Caco-2 (cell line): ENCODE measurements at regions of chr17 and their contacts with region 1.

Region 1: DNA sequence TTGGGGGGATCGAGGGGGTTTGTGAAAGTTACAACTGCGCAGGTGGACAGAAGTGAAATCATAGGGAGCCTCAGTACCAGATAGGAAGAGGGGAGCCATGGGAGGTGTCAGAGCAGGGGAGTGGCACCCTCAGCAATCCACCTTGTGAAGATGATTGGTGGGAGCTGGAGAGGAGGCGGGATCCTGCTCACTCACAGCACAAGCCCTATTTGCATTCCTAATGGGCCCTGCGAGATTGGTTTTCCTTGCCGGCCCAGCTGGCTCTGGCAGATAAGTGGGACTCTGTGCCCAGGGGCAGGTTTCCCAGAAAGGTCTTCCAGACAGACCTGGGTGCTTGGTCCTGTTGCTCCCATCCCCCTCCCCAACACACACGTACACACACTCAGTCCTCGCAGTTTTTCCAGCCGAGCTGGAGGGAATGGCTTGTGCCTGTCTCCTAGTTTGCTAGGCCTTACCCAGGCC is 9.4 kb downstream of the WNT3 start:
- DNase-seq: peak in 1 of 2 experiments; percentile 64
- H3K4me3 ChIP-seq: no peak overlapping the region
- H3K4me3 Mint-ChIP-seq: no peak overlapping the region
- H3K27ac Mint-ChIP-seq: no peak overlapping the region
- H3K4me1 ChIP-seq: peaks cover 14% of the 10 kb centered on the region; the same call in 1 of the 2 replicates
- H3K4me1 Mint-ChIP-seq: no peaks in the 10 kb centered on the region
- H3K27me3 ChIP-seq: no peaks in the 10 kb centered on the region
- H3K27me3 Mint-ChIP-seq: no peaks in the 10 kb centered on the region
- CTCF ChIP-seq: no peak

Region 2: DNA sequence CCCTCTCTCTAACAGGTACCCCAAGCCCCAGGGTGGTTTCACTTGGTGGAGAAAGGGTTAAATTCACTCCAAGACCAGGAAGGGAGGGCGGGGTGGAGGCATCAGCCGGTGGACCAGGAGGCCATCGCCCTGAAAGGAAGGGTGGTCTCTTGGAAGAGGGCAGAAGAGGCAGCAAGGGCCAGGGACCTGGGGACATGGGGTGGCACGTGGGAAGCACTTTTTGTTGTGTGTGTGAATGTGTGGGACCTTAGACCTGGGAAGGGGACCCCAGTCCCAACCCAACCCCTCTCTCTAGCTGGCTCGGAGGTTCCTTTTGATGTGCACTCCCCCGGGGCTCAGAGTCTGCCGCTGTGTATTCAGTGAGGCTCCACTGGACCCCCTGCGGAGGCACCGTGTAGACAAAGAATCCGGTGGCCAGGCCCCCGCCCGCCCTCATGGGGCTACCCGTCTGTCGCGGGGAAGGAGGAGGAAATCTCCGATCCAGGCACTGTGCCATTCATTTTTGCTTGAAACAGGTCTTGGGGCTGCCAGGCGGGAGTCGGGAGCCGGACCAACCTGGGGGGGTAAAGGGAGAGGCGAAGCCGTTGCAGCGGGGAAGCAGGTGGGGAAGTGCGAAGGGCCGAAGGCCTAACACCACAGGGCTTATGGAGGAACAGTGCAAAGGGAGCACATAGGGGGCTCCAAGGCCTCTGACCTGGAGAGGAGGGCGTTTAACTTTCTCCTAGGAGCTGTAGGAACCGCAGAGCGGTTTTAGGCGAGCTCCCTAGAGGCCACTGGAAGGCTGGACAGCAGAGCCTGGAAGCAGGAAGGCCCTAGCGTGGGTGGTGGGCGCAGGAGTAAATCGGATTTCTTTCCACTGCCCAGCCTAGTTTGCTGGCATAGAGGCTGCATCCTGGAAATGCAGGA is 12.6 kb after region 1 on chr17:
- CTCF ChIA-PET with region 1: no interaction called
- POLR2A ChIA-PET with region 1: no interaction called
- intact Hi-C with region 1: loop called (anchors 1 kb)
- DNase-seq: no peak
- H3K4me3 ChIP-seq: no peak overlapping the region
- H3K4me3 Mint-ChIP-seq: no peak overlapping the region
- H3K27ac Mint-ChIP-seq: no peak overlapping the region
- H3K4me1 ChIP-seq: peaks cover 8% of the 10 kb centered on the region; the same call in 1 of the 2 replicates
- H3K4me1 Mint-ChIP-seq: no peaks in the 10 kb centered on the region
- H3K27me3 ChIP-seq: no peaks in the 10 kb centered on the region
- H3K27me3 Mint-ChIP-seq: peaks cover 3% of the 10 kb centered on the region
- CTCF ChIP-seq: no peak